H1 (cell line): ENCODE measurements at regions of chr7 and their contacts with region 1.

Region 1: GRCh38 chr7:104358446-104359145 is 30.2 kb downstream of the LHFPL3 start:
- DNase-seq: no peak
- H3K4me3 ChIP-seq: no peak overlapping the region
- H3K27ac ChIP-seq: no peak overlapping the region
- H3K4me1 ChIP-seq: peaks cover 0 to 5% (median 3%) of the 10 kb centered on the region in 4 experiments; a peak in 4 of 7 replicates
- H3K27me3 ChIP-seq: no peaks in the 10 kb centered on the region
- CTCF ChIP-seq: no peak
- EP300 ChIP-seq: no peak
- POLR2A ChIP-seq: no peak
- RAD21 ChIP-seq: no peak

Region 2: DNA sequence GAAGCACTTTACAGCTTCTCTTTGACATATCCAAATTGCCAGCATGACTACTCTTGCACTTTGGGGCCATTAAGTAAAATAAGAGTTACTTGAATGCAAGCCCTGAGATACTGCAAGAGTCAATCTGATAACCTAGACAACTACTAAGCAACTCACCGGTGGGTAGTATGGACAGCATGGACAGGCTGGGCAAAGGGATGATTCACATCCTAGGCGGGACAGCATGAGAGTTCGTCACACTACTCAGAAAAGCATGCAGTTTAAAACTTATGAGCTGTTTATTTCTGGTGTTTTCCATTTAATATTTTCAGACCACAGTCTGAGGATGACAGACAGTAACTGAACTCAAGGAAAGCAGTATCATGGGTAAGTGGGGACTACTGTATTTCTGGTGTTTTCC is 234.8 kb before region 1 on chr7:
- CTCF ChIA-PET with region 1: no interaction called
- POLR2A ChIA-PET with region 1: no interaction called
- DNase-seq: no peak
- H3K4me3 ChIP-seq: no peak overlapping the region
- H3K27ac ChIP-seq: no peak overlapping the region
- H3K4me1 ChIP-seq: peaks cover 0 to 4% (median 0%) of the 10 kb centered on the region in 4 experiments; a peak in 1 of 7 replicates
- H3K27me3 ChIP-seq: no peaks in the 10 kb centered on the region
- CTCF ChIP-seq: no peak
- EP300 ChIP-seq: no peak
- POLR2A ChIP-seq: no peak
- RAD21 ChIP-seq: no peak

Region 3: GRCh38 chr7:104267701-104268368 is 90.8 kb before region 1 on chr7:
- CTCF ChIA-PET with region 1: interaction called, 13 read pairs
- POLR2A ChIA-PET with region 1: no interaction called
- DNase-seq: no peak
- H3K4me3 ChIP-seq: no peak overlapping the region
- H3K27ac ChIP-seq: no peak overlapping the region
- H3K4me1 ChIP-seq: no peaks in the 10 kb centered on the region
- H3K27me3 ChIP-seq: no peaks in the 10 kb centered on the region
- CTCF ChIP-seq: peak in 1 of 3 experiments; percentile 43; a peak in 1 of 4 replicates
- EP300 ChIP-seq: no peak
- POLR2A ChIP-seq: no peak
- RAD21 ChIP-seq: peak in 1 of 2 experiments; percentile 14; a peak in 1 of 4 replicates

Region 4: GRCh38 chr7:104382616-104383015 is 24.0 kb after region 1 on chr7:
- CTCF ChIA-PET with region 1: no interaction called
- POLR2A ChIA-PET with region 1: no interaction called
- DNase-seq: no peak
- H3K4me3 ChIP-seq: no peak overlapping the region
- H3K27ac ChIP-seq: no peak overlapping the region
- H3K4me1 ChIP-seq: no peaks in the 10 kb centered on the region; a peak in 1 of 7 replicates
- H3K27me3 ChIP-seq: no peaks in the 10 kb centered on the region
- CTCF ChIP-seq: no peak
- EP300 ChIP-seq: no peak
- POLR2A ChIP-seq: no peak
- RAD21 ChIP-seq: no peak

Region 5: DNA sequence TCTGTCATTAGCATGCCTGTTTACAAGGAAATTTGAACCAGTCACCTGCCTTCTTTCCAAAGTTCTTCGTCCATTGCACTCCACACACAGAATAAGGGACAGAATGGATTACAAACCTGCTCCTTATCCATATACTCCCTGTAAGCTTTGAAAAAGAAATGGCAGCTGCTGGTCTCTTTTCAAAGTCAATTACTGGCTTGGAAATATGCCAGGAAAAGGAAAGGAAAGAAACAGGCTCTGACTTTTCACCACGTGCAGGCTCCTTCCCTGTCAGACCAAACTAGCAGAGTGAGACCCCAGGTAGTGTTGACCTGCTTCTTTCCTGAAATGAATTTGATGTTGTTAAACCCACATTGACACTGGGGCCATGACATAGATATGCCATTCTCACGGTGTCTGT is 54.3 kb after region 1 on chr7:
- CTCF ChIA-PET with region 1: no interaction called
- POLR2A ChIA-PET with region 1: no interaction called
- DNase-seq: no peak
- H3K4me3 ChIP-seq: no peak overlapping the region
- H3K27ac ChIP-seq: no peak overlapping the region
- H3K4me1 ChIP-seq: no peaks in the 10 kb centered on the region
- H3K27me3 ChIP-seq: no peaks in the 10 kb centered on the region
- CTCF ChIP-seq: no peak
- EP300 ChIP-seq: no peak
- POLR2A ChIP-seq: no peak
- RAD21 ChIP-seq: no peak